GM13977 (cell line): ENCODE measurements at regions of chr17 and their contacts with region 1.

Region 1: GRCh38 chr17:36072431-36073121 is 8.5 kb downstream of the CCL18 start:
- DNase-seq: peak; percentile 71
- CTCF ChIP-seq: peak; percentile 83

Region 2: DNA sequence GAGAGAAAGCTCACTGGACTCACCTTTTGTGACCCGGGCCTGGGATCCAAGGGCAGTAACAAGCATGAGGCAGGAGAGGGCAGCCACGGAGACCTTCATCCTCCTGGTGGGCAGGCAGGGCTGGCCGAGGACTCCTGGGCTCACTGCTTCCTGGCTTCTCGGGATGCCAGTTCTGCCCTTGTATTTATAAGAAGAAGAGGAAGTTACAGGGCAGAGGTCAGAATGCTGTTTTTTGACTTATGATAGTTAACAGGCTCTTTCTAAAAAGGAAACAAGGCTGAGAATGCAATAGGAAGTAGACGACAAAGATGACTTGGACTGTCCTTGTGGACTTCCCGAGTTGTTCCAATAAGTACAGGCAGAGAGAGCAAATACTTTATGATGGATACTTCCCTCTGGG is 54.8 kb before region 1 on chr17 and contains the start of gene CCL23:
- in situ Hi-C with region 1: loop called (anchors 10 kb)
- DNase-seq: no peak
- CTCF ChIP-seq: no peak